ENCODE measurements at regions of chr15 and their contacts with region 1.

Region 1: DNA sequence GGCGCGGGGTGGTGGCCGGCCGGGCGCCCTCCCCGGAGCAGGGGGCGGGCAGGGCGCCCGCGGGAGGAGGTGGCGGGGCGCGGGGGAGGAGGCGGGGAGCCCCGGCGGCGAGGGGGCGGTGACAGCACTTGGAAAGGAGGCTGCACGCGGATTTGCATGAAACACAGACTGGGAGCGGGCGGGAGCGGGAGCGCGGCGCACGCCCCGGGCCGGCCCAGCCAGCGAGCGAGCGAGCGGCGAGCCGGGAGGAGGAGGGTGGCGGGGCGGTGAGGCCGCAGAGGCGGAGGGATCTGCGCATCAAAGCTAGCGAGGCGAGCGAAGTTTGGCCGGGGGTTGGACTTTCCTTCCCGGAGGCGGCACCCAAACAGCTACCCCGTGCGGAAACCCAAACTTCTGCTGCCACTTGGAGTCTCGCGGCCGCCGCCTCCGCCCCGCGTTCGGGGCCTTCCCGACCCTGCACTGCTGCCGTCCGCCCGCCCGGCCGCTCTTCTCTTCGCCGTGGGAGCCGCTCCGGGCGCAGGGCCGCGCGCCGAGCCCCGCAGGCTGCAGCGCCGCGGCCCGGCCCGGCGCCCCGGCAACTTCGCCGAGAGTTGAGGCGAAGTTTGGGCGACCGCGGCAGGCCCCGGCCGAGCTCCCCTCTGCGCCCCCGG is at the start of gene SMAD3:
- DNase-seq: peak; percentile 90 to 96 (median 93)
- ATAC-seq: peak; percentile 82
- H3K4me3 ChIP-seq: peak within 1 kb of the TSS; percentile 71 to 75
- H3K27ac ChIP-seq: peak within 1 kb of the TSS; percentile 87 to 89
- H3K4me1 ChIP-seq: peaks cover 23 to 56% of the 10 kb centered on the region in 2 donors
- H3K27me3 ChIP-seq: peaks cover 0 to 14% of the 10 kb centered on the region in 2 donors
- CTCF ChIP-seq: no peak
- polyA plus RNA-seq, gene SMAD3: 49.5 to 53.6 (median 51.2) TPM

Region 2: DNA sequence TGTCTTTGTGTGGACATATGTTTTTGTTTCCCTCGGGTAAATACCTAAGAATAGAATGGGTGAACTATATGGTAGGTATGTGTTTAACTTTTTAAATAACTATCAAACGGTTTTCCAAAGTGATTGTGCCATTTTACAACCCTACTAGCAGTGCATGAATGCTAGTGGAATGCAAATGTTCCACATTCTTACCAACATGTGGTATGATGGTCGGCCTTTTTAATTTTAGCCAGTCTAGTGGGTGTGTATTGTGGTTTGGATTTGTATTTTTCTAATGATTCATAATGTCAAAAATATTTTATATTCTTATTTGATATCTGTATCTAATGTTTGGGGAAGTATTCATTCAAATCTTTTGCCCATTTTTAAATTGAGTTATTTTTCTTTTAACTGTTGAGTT is 68.4 kb before region 1 on chr15:
- intact Hi-C with region 1: no loop called
- DNase-seq: no peak
- ATAC-seq: no peak
- H3K4me3 ChIP-seq: no peak overlapping the region
- H3K27ac ChIP-seq: no peak overlapping the region
- H3K4me1 ChIP-seq: no peaks in the 10 kb centered on the region
- H3K27me3 ChIP-seq: no peaks in the 10 kb centered on the region
- CTCF ChIP-seq: no peak

Region 3: DNA sequence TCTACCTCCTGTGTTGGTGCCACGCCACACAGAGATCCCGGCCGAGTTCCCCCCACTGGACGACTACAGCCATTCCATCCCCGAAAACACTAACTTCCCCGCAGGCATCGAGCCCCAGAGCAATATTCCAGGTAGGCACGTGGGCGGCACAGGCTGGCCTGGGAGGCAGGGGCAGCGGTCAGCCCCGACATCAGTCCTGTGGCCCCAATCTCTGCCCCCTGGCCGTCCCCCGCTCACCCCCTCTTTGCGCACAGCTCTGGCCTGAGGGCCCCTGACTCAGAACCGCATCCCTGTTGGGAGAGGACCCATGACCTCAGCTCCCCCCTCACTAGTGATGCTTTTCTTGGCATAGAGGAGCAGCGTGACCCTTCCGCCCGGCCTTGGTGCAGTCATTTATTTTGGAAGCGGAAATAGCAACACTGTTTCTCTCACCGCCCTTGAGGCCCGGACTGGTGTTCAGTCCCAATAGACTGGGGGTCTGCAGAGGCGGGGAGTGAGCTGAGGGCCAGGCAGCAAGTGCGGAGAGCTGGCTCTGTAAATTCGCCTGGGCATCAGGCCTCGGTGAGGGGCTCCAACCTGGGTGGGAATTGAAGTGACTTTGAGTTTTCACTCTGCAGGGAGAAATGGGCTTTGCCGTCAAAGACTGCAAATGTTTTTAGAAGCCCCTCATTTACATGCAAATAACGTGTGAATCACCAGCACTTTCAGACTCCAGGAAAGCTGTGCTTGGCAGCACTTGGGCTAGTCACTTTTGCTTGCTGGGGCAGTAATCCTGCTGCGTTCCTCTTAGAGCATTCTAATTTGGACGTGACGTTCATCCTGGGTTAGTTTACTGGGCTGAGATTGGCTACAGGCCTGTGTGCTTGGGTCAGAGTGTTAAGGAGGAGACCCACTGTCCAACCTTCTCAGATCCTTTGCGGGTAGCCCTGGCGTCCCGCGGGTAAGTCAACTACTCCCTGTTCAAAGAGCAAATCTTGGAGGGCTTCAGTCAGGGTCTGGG is 100.0 kb after region 1 on chr15:
- intact Hi-C with region 1: loop called in 1 of 2 experiments (anchors 10 kb)
- DNase-seq: no peak
- ATAC-seq: no peak
- H3K4me3 ChIP-seq: no peak overlapping the region
- H3K27ac ChIP-seq: no peak overlapping the region
- H3K4me1 ChIP-seq: peaks cover 11 to 33% of the 10 kb centered on the region in 2 donors
- H3K27me3 ChIP-seq: no peaks in the 10 kb centered on the region
- CTCF ChIP-seq: no peak